T-cell (primary cell): ENCODE measurements at regions of chr11 and their contacts with region 1.

Region 1: DNA sequence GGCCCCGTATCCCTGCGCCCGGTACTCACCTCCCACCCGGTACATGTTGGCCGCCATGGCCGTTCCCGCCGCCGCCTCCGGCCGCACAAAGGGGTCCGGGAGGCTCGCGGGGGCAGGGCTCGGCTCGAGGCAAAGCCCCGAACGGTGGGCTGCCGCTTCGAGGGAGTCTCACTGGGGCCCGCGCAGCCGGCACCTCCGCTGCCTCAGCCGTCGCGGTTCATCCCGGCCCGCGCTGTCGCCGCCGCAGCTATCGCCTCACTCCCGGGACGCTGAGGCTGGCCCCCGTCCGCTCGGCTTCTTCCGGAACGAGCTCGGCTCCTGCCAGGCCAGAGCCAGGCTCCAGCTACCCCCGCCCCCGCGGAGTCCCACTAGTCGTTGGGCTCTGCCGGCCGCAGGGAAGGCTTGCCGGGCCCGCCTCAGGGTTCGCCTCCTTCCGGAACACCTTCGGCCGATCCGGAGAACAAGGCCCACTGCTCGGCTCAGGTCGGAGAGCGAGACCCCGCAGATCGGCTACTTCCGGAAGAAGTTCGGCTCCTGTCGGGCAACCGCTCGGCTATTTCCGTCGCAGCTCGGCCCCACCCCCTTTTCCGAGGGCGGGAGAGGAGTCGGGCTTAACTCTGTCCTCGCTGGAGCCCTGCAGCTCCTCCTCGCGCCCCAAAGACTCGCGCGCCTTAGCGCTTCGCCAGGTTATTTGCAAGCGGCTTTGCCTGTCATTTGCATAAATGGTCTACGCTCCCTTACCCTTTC is at the start of gene MTA2:
- DNase-seq: peak; percentile 91 to 100 (median 97)
- ATAC-seq: peak; percentile 80 to 83 (median 82)
- H3K4me3 ChIP-seq: peak within 1 kb of the TSS; percentile 95 to 98
- H3K4me3 Mint-ChIP-seq: peak within 1 kb of the TSS; percentile 86 to 97 (median 92)
- H3K27ac ChIP-seq: peak within 1 kb of the TSS; percentile 85
- H3K27ac Mint-ChIP-seq: peak within 1 kb of the TSS; percentile 95 to 100
- H3K4me1 ChIP-seq: peaks cover 14 to 52% of the 10 kb centered on the region in 2 experiments
- H3K4me1 Mint-ChIP-seq: peaks cover 55 to 59% (median 55%) of the 10 kb centered on the region in 3 donors
- H3K27me3 ChIP-seq: no peaks in the 10 kb centered on the region
- H3K27me3 Mint-ChIP-seq: no peaks in the 10 kb centered on the region
- total RNA-seq, gene MTA2: 151 to 185 (median 184) TPM

Region 2: DNA sequence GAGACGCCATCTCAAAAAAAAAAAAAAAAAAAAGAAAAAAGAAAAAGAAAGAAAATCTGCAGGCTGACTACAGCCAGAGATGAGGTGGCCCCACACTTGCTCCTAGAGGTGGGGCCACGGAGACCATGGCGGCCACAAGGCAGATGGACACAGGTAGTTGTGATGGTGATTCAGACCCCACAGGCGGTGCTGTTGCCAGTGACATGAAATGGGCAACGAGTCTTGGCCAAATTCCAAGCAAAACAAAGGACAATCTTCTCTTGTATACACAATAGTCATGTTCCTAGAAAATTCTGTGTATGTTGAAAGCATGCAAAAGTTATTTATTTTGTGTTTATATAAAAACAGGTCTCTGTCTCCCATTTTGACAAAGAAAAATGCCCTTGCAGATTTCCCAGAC is 944.0 kb before region 1 on chr11:
- CTCF ChIA-PET with region 1: no interaction called
- POLR2A ChIA-PET with region 1: no interaction called
- DNase-seq: no peak
- ATAC-seq: no peak
- H3K4me3 ChIP-seq: no peak overlapping the region
- H3K4me3 Mint-ChIP-seq: no peak overlapping the region
- H3K27ac ChIP-seq: no peak overlapping the region
- H3K27ac Mint-ChIP-seq: no peak overlapping the region
- H3K4me1 ChIP-seq: no peaks in the 10 kb centered on the region
- H3K4me1 Mint-ChIP-seq: no peaks in the 10 kb centered on the region
- H3K27me3 ChIP-seq: peaks cover 0 to 30% of the 10 kb centered on the region in 2 experiments
- H3K27me3 Mint-ChIP-seq: peaks cover 16 to 25% of the 10 kb centered on the region in 2 donors

Region 3: GRCh38 chr11:61718621-61719302 is 882.8 kb before region 1 on chr11:
- CTCF ChIA-PET with region 1: no interaction called
- POLR2A ChIA-PET with region 1: no interaction called
- DNase-seq: no peak
- ATAC-seq: no peak
- H3K4me3 ChIP-seq: no peak overlapping the region
- H3K4me3 Mint-ChIP-seq: no peak overlapping the region
- H3K27ac ChIP-seq: no peak overlapping the region
- H3K27ac Mint-ChIP-seq: no peak overlapping the region
- H3K4me1 ChIP-seq: no peaks in the 10 kb centered on the region
- H3K4me1 Mint-ChIP-seq: no peaks in the 10 kb centered on the region
- H3K27me3 ChIP-seq: peaks cover 0 to 17% of the 10 kb centered on the region in 2 experiments
- H3K27me3 Mint-ChIP-seq: peaks cover 0 to 6% of the 10 kb centered on the region in 2 donors

Region 4: DNA sequence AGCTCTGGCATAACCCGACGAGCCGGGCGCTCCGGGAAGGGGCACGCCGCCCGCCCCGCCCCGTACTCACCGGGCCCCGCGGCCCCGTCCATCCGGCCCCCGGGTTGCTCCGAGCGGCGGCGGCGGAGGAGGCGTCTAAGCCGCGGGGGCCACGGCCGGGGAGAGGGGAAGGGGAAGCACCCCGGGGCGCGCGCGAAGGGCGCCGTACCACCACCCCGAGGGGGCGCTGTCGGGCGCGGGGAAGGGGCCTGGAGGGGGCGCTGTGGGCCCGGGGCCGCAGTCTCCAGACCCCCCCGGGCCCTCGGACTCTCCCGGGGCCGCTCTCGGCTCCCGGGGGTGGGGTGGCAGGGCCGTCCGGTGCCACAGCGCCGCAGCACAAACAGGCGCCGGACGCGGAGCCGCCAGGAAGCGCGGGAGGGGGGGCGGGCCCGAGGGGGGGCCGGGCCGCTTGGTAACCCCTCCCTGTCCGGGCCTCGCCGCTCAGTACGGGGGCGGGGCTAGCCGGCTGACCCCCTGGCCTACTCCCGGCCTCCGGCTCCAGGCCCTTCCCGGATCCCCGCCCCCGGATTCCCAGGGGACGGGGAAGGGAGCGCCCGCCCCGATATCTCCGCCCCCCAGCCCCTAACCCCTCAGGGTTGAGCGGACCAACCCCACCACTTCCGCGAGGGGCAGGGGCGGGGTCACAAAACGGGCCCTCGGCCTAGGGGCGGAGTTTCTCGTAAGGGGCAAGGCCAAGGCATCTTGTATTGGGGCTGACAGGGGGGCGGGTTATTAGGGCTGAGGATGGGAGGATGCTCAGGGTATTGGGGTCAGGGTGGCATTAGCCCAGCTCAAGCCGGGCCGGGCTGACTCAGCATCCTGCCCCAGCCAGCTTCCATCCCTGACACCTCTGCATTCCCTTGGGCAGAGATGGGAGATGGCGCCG is 11.1 kb after region 1 on chr11 and contains the starts of genes EML3 and ROM1:
- CTCF ChIA-PET with region 1: interaction called in 1 of 2 experiments, 10 read pairs
- POLR2A ChIA-PET with region 1: interaction called in 1 of 2 experiments, 4 read pairs
- DNase-seq: peak; percentile 71 to 94 (median 81)
- ATAC-seq: peak; percentile 77 to 80 (median 80)
- H3K4me3 ChIP-seq: peak within 1 kb of the TSS; percentile 85 to 88
- H3K4me3 Mint-ChIP-seq: peak within 1 kb of the TSS; percentile 97 to 98 (median 97)
- H3K27ac ChIP-seq: peak within 1 kb of the TSS; percentile 83
- H3K27ac Mint-ChIP-seq: peak within 1 kb of the TSS; percentile 98
- H3K4me1 ChIP-seq: peaks cover 3 to 54% of the 10 kb centered on the region in 2 experiments
- H3K4me1 Mint-ChIP-seq: peaks cover 48 to 57% (median 49%) of the 10 kb centered on the region in 3 donors
- H3K27me3 ChIP-seq: no peaks in the 10 kb centered on the region
- H3K27me3 Mint-ChIP-seq: no peaks in the 10 kb centered on the region
- total RNA-seq, gene EML3: 160 to 372 (median 328) TPM
- total RNA-seq, gene ROM1: 1.6 to 4.5 (median 3.5) TPM